ENCODE measurements at regions of chr20 and their contacts with region 1.

Region 1: GRCh38 chr20:1094751-1095150 is 23.7 kb upstream of the PSMF1 start:
- DNase-seq: no peak
- H3K27ac ChIP-seq: no peak overlapping the region
- CTCF ChIP-seq: no peak

Region 2: DNA sequence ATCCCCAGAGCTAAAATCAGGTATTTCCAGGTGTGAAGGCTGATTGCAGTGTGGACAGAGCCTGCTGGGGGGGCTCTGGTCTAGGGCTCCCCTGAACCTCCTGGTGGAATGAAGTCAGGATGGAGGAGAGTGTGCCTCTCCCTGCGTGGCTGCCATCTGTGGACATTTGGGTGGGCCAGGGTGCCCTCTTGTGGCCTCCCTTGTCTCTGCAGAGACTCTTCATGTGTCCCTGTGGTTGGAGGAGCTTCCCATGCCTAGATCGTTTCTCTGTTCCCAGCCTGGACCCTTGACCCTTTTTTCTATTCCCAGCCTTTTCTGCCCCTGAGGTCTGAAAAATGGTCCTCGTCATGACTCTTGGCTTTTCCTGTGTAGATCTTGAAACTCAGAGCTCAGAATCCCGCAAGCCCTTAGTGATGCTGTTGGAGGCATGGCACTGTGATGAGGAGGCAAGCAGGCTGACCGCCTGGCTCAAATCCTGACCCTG is 13.7 kb after region 1 on chr20:
- CTCF ChIA-PET with region 1: interaction called, 13 read pairs
- POLR2A ChIA-PET with region 1: no interaction called
- DNase-seq: peak; percentile 60
- H3K27ac ChIP-seq: no peak overlapping the region
- CTCF ChIP-seq: peak; percentile 83